Esophagus muscularis mucosa (tissue), 4 donors: ENCODE measurements at regions of chr19 and their contacts with region 1.

Region 1: GRCh38 chr19:46076951-46077816 is 36.4 kb upstream of the IGFL4 start:
- DNase-seq: no peak
- H3K4me3 ChIP-seq: peak overlapping the region in 3 of 4 donors; percentile 0 to 45 (median 24)
- H3K27ac ChIP-seq: no peak overlapping the region
- H3K4me1 ChIP-seq: peaks cover 5 to 9% (median 8%) of the 10 kb centered on the region in 4 donors
- H3K27me3 ChIP-seq: peaks cover 6 to 81% (median 32%) of the 10 kb centered on the region in 4 donors
- CTCF ChIP-seq: peak; percentile 36 to 46 (median 37)
- EP300 ChIP-seq: no peak
- POLR2A ChIP-seq: no peak

Region 2: DNA sequence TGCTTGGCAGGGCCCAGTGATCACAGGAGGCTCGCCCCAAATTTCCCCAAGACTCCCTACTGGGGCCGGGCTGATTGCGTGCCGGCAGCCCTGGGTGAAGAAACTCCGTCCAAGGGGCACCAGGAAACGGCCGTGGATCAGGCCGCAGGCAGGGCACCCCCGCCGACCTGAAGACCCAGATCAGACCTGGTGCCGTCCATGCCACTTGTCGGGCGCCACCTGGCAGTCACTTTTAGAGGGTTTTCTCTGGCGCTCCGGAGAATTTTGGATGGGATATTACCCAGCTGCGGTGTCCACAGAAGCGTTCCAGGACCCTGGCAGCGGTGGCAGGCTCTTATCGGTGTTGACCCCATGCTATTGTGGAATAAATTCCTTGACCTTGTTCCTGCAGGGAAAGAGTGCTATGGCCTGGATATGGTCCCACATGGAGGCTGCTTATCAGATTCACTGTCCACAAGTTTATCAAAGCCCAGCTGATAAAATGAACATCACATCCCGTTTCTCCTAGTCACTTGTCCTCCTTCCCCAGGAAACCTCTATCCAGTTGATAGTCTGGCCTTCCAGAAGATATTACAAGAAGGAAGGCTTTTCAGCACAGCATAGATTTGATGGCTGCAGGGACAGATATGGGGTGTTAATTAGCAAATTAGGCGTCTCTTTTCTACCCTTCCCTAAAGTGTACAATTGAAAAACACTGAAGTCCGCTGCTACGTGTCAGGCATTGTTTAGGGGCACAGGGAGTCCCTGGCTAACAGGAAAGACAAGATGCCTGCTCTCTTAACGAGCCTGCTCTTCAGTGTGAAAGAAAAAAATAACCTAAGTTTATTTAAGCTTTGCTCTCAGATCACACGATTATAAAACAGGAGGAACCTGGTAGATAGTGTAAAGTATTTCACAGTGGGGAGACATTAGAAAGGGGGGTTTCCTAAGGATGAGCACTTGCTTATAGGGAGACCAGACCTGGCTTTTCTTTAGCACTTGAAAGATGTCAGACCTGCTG is 109.2 kb after region 1 on chr19:
- intact Hi-C with region 1: loop called (anchors 5 kb)
- DNase-seq: no peak
- H3K4me3 ChIP-seq: no peak overlapping the region
- H3K27ac ChIP-seq: no peak overlapping the region
- H3K4me1 ChIP-seq: peaks cover 0 to 3% (median 0%) of the 10 kb centered on the region in 4 donors
- H3K27me3 ChIP-seq: peaks cover 0 to 37% (median 2%) of the 10 kb centered on the region in 4 donors
- CTCF ChIP-seq: no peak
- EP300 ChIP-seq: no peak
- POLR2A ChIP-seq: no peak

Region 3: GRCh38 chr19:46265217-46265828 is 188.1 kb after region 1 on chr19:
- intact Hi-C with region 1: loop called (anchors 2 kb)
- DNase-seq: peak; percentile 96
- H3K4me3 ChIP-seq: no peak overlapping the region
- H3K27ac ChIP-seq: no peak overlapping the region
- H3K4me1 ChIP-seq: no peaks in the 10 kb centered on the region
- H3K27me3 ChIP-seq: peaks cover 0 to 47% (median 0%) of the 10 kb centered on the region in 4 donors
- CTCF ChIP-seq: peak; percentile 86 to 93 (median 88)
- EP300 ChIP-seq: no peak
- POLR2A ChIP-seq: no peak